ENCODE measurements at regions of chr21 and their contacts with region 1.

Region 1: DNA sequence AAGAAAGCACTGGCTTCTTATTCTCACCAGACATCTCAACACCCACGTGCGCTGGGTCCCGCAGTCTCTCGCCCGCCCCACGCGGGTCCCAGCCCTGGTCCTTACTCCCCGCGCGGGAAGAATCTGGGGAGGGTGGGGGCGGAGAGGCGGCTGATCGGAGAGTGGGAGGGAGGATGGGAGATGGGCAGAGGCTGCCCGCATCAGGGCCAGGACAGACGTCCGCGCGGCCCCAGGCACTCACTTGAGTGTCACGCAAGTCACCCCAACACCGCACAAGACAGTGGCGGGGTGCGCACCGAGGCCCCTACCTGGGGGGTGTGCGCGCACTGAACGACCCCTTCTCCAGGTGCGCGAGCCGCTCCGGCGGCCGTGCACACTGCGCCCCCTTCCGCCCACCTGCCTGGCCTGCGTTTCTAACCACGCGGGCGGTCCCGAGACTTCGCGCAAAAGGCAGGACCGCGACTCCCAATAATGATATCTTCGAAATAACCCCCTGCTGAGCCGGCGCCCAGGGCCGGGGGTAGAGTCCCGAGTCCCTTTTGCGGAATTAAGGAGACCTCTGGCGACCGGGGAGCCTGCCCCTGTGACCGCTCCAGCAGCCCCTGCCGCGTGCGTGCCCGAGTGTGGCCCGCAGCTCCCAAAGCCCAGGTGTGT is 6.0 kb upstream of the SIM2 start:
- DNase-seq: peak; percentile 26
- ATAC-seq: no peak
- H3K4me3 Mint-ChIP-seq: no peak overlapping the region
- H3K27ac Mint-ChIP-seq: no peak overlapping the region
- H3K4me1 Mint-ChIP-seq: peaks cover 9% of the 10 kb centered on the region
- H3K27me3 Mint-ChIP-seq: peaks cover 77% of the 10 kb centered on the region

Region 2: GRCh38 chr21:35658242-35658641 is 1034.7 kb before region 1 on chr21:
- CTCF ChIA-PET with region 1: no interaction called
- POLR2A ChIA-PET with region 1: no interaction called
- intact Hi-C with region 1: no loop called
- DNase-seq: peak; percentile 6
- ATAC-seq: peak; percentile 65
- H3K4me3 Mint-ChIP-seq: no peak overlapping the region
- H3K27ac Mint-ChIP-seq: no peak overlapping the region
- H3K4me1 Mint-ChIP-seq: peaks cover 11% of the 10 kb centered on the region
- H3K27me3 Mint-ChIP-seq: peaks cover 3% of the 10 kb centered on the region

Region 3: GRCh38 chr21:36369064-36369685 is 323.8 kb before region 1 on chr21:
- CTCF ChIA-PET with region 1: no interaction called
- POLR2A ChIA-PET with region 1: no interaction called
- intact Hi-C with region 1: no loop called
- DNase-seq: no peak
- ATAC-seq: peak; percentile 58
- H3K4me3 Mint-ChIP-seq: no peak overlapping the region
- H3K27ac Mint-ChIP-seq: peak overlapping the region; percentile 65
- H3K4me1 Mint-ChIP-seq: peaks cover 3% of the 10 kb centered on the region
- H3K27me3 Mint-ChIP-seq: no peaks in the 10 kb centered on the region

Region 4: GRCh38 chr21:36516281-36516680 is 176.7 kb before region 1 on chr21:
- CTCF ChIA-PET with region 1: no interaction called
- POLR2A ChIA-PET with region 1: no interaction called
- intact Hi-C with region 1: no loop called
- DNase-seq: no peak
- ATAC-seq: no peak
- H3K4me3 Mint-ChIP-seq: no peak overlapping the region
- H3K27ac Mint-ChIP-seq: no peak overlapping the region
- H3K4me1 Mint-ChIP-seq: peaks cover 3% of the 10 kb centered on the region
- H3K27me3 Mint-ChIP-seq: peaks cover 4% of the 10 kb centered on the region

Region 5: DNA sequence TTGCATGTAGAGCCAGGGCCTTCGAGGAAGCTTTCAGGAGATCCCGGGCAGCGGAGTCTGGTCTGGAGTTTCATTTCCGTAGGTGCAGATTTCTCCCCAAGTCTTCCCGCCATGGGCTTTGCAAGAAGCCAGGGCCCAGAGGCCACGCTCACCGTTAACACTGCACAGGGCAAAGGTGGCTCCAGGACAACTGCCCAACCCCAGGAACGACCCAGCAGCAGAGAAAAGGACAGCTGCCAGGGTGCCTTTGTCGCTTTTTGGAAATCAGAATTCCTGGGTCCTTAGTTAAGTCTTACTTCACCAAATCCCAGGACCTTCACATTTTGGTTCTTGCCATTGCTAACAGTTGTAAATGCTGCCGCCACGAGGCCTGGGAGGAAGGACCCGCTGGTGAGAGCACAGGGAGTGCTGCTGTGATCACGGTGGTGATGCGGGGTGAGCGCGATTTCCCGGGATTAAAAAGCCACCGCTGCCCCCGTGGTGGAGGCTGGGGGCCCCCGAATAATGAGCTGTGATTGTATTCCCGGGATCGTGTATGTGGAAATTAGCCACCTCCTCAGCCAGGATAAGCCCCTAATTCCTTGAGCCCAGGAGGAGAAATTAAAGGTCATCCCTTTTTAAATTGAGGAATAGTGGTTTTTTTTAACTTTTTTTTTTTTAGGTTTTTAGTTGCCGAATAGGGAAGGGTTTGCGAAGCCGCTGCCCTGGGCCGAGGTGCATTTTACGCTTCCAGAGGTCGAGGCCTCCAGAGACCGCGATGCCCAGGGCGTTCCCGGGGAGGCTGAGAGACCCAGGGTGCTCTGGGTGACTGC is 14.2 kb after region 1 on chr21:
- CTCF ChIA-PET with region 1: interaction called, 3 read pairs
- POLR2A ChIA-PET with region 1: no interaction called
- intact Hi-C with region 1: loop called (anchors 1 to 2 kb)
- DNase-seq: peak; percentile 47
- ATAC-seq: no peak
- H3K4me3 Mint-ChIP-seq: no peak overlapping the region
- H3K27ac Mint-ChIP-seq: no peak overlapping the region
- H3K4me1 Mint-ChIP-seq: peaks cover 45% of the 10 kb centered on the region
- H3K27me3 Mint-ChIP-seq: peaks cover 71% of the 10 kb centered on the region

Region 6: DNA sequence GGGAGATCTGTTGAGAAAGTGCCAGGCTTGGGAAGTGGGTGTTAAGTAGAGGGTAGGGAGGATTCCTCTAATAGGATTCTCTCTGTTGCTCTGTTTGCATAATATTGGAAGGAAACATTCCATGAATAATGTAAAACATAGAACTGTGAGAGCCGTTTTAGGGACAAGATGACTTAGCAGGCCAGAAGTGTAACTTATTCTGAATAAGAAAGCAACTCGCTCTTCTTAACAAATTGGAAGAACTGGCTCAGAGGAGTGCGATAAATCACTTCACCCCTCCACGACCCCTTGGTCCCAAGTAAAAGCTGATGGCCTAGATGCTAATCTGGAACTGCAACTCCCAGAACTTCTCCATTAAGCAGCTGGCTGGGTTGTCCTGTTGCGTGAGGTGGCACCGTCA is 25.0 kb after region 1 on chr21:
- CTCF ChIA-PET with region 1: no interaction called
- POLR2A ChIA-PET with region 1: no interaction called
- intact Hi-C with region 1: no loop called
- DNase-seq: no peak
- ATAC-seq: no peak
- H3K4me3 Mint-ChIP-seq: no peak overlapping the region
- H3K27ac Mint-ChIP-seq: no peak overlapping the region
- H3K4me1 Mint-ChIP-seq: no peaks in the 10 kb centered on the region
- H3K27me3 Mint-ChIP-seq: peaks cover 41% of the 10 kb centered on the region